ENCODE measurements at regions of chr9 and their contacts with region 1.

Region 1: GRCh38 chr9:112379177-112380101 is 469 bp upstream of the HSDL2 start:
- DNase-seq: peak; percentile 93 to 96 (median 94)
- H3K4me3 ChIP-seq: peak overlapping the region; percentile 90 to 96
- H3K4me3 Mint-ChIP-seq: peak overlapping the region; percentile 97 to 100 (median 100)
- H3K27ac ChIP-seq: peak overlapping the region; percentile 91
- H3K27ac Mint-ChIP-seq: peak overlapping the region; percentile 93 to 100 (median 99)
- H3K4me1 ChIP-seq: peaks cover 23% of the 10 kb centered on the region
- H3K4me1 Mint-ChIP-seq: peaks cover 32 to 65% (median 45%) of the 10 kb centered on the region in 4 donors
- H3K27me3 ChIP-seq: no peaks in the 10 kb centered on the region
- H3K27me3 Mint-ChIP-seq: no peaks in the 10 kb centered on the region

Region 2: GRCh38 chr9:111631071-111631971 is 748.1 kb before region 1 on chr9 and contains the start of gene DNAJC25:
- CTCF ChIA-PET with region 1: no interaction called
- POLR2A ChIA-PET with region 1: interaction called, 9 read pairs
- intact Hi-C with region 1: loop called (anchors 2 kb)
- DNase-seq: peak; percentile 96 to 98 (median 98)
- H3K4me3 ChIP-seq: peak within 1 kb of the TSS; percentile 69 to 86
- H3K4me3 Mint-ChIP-seq: peak within 1 kb of the TSS; percentile 94 to 99 (median 98)
- H3K27ac ChIP-seq: peak within 1 kb of the TSS; percentile 76
- H3K27ac Mint-ChIP-seq: peak within 1 kb of the TSS; percentile 88 to 97 (median 94)
- H3K4me1 ChIP-seq: peaks cover 21% of the 10 kb centered on the region
- H3K4me1 Mint-ChIP-seq: peaks cover 35 to 52% (median 43%) of the 10 kb centered on the region in 4 donors
- H3K27me3 ChIP-seq: no peaks in the 10 kb centered on the region
- H3K27me3 Mint-ChIP-seq: peaks cover 0 to 1% of the 10 kb centered on the region in 2 donors
- total RNA-seq, gene DNAJC25: 5.1 to 5.6 TPM

Region 3: DNA sequence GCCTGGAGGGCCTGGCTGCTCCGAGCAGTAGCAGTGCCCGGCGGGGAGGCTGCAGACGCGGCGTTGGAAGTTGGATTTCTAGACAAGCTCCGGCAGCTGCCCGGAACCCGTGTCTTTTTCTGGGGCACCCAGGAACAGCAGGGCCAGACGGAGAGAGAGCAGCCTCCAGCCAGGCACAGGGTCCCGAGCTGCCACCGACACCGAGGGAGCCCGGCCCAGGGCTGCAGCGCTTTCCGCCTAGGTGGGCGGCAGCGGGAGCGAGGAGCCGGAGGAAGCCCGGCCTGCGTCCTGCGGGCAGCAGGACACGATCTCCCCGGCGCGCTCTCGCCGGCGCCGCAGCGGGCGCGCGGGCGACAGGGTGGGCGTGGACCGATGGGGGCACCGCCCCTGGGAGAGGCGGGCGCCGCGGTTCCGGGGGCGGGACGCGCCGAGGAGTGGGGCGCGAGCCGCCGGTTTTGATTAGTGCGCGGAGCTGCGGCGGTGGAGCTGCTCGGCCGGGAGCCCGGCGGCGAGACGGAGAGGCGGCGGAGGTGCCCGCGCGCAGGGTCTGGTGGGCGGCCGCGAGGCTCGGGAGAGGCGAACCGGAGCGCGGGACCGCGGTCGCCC is 483.0 kb before region 1 on chr9 and contains the start of gene UGCG:
- CTCF ChIA-PET with region 1: no interaction called
- POLR2A ChIA-PET with region 1: interaction called, 8 read pairs
- intact Hi-C with region 1: loop called (anchors 1 kb)
- DNase-seq: peak; percentile 84 to 92 (median 89)
- H3K4me3 ChIP-seq: peak within 1 kb of the TSS; percentile 87 to 97
- H3K4me3 Mint-ChIP-seq: peak within 1 kb of the TSS; percentile 90 to 96 (median 93)
- H3K27ac ChIP-seq: peak within 1 kb of the TSS; percentile 70
- H3K27ac Mint-ChIP-seq: peak within 1 kb of the TSS; percentile 91 to 97 (median 95)
- H3K4me1 ChIP-seq: peaks cover 58% of the 10 kb centered on the region
- H3K4me1 Mint-ChIP-seq: peaks cover 23 to 32% (median 31%) of the 10 kb centered on the region in 4 donors
- H3K27me3 ChIP-seq: no peaks in the 10 kb centered on the region
- H3K27me3 Mint-ChIP-seq: no peaks in the 10 kb centered on the region
- total RNA-seq, gene UGCG: 26.3 to 29.7 TPM

Region 4: GRCh38 chr9:112212926-112213325 is 166.5 kb before region 1 on chr9:
- CTCF ChIA-PET with region 1: no interaction called
- POLR2A ChIA-PET with region 1: no interaction called
- intact Hi-C with region 1: no loop called
- DNase-seq: no peak
- H3K4me3 ChIP-seq: no peak overlapping the region
- H3K4me3 Mint-ChIP-seq: no peak overlapping the region
- H3K27ac ChIP-seq: no peak overlapping the region
- H3K27ac Mint-ChIP-seq: no peak overlapping the region
- H3K4me1 ChIP-seq: no peaks in the 10 kb centered on the region
- H3K4me1 Mint-ChIP-seq: peaks cover 0 to 4% (median 2%) of the 10 kb centered on the region in 4 donors
- H3K27me3 ChIP-seq: no peaks in the 10 kb centered on the region
- H3K27me3 Mint-ChIP-seq: no peaks in the 10 kb centered on the region

Region 5: GRCh38 chr9:112348257-112349007 is 31.0 kb before region 1 on chr9:
- CTCF ChIA-PET with region 1: no interaction called
- POLR2A ChIA-PET with region 1: interaction called, 5 read pairs
- intact Hi-C with region 1: loop called (anchors 1 kb)
- DNase-seq: peak; percentile 61 to 72 (median 65)
- H3K4me3 ChIP-seq: peak overlapping the region in 1 of 2 donors; percentile 51
- H3K4me3 Mint-ChIP-seq: peak overlapping the region; percentile 52 to 85 (median 78)
- H3K27ac ChIP-seq: no peak overlapping the region
- H3K27ac Mint-ChIP-seq: peak overlapping the region in 4 of 7 donors; percentile 67 to 83 (median 79)
- H3K4me1 ChIP-seq: peaks cover 11% of the 10 kb centered on the region
- H3K4me1 Mint-ChIP-seq: peaks cover 5 to 14% (median 9%) of the 10 kb centered on the region in 4 donors
- H3K27me3 ChIP-seq: no peaks in the 10 kb centered on the region
- H3K27me3 Mint-ChIP-seq: peaks cover 2 to 3% of the 10 kb centered on the region in 2 donors

Region 6: DNA sequence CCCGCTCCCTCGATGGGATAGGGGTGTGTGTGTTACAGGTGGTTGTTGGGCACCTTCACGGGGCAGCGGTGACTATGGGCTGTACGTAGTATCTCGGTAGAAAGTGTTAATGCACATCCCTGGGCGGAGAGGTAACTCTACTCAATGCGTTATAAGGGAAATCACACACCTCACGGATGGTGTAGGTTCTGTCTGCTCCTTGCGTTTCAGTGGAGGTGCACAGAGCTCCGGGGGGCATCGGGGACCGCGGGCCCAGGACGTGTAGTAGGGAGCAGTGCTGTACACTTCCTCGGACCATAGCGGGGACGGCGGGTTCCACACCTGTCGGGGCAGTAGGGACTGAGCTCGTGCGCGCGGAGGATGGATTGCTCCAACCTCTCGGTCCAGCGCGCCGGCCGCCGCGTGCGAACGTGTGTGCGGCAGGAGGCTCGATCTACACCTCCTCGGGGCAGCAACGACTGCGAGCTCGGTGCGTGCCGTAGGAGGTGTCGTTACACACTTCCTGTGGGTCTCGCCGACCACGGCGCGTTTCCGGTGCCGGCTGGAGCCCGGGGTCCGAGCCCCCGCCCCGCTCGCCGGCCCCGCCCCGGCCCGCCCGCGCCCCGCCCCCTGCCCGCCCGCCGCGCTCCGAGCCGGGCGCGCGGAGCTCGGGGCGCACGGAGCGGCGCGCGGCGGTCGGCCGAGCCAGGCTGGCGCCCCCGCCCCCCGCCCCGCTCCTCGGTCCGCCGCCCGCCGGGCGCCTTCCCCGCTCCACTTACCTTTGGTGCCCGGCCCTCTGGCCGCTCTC is 107.0 kb after region 1 on chr9 and contains the start of gene KIAA1958:
- CTCF ChIA-PET with region 1: interaction called, 3 read pairs
- POLR2A ChIA-PET with region 1: interaction called, 19 read pairs
- intact Hi-C with region 1: loop called (anchors 2 kb)
- DNase-seq: peak; percentile 65 to 76 (median 72)
- H3K4me3 ChIP-seq: peak within 1 kb of the TSS; percentile 77 to 78
- H3K4me3 Mint-ChIP-seq: peak within 1 kb of the TSS; percentile 93 to 99 (median 96)
- H3K27ac ChIP-seq: peak within 1 kb of the TSS; percentile 42
- H3K27ac Mint-ChIP-seq: peak within 1 kb of the TSS; percentile 79 to 95 (median 92)
- H3K4me1 ChIP-seq: peaks cover 8% of the 10 kb centered on the region
- H3K4me1 Mint-ChIP-seq: peaks cover 9 to 28% (median 16%) of the 10 kb centered on the region in 4 donors
- H3K27me3 ChIP-seq: no peaks in the 10 kb centered on the region
- H3K27me3 Mint-ChIP-seq: no peaks in the 10 kb centered on the region
- total RNA-seq, gene KIAA1958: 4.3 to 5.1 TPM

Region 7: GRCh38 chr9:112750111-112750767 is 370.8 kb after region 1 on chr9 and contains the start of gene SNX30:
- CTCF ChIA-PET with region 1: no interaction called
- POLR2A ChIA-PET with region 1: interaction called, 11 read pairs
- intact Hi-C with region 1: loop called (anchors 2 kb)
- DNase-seq: peak; percentile 76 to 84 (median 80)
- H3K4me3 ChIP-seq: peak within 1 kb of the TSS; percentile 57 to 77
- H3K4me3 Mint-ChIP-seq: peak within 1 kb of the TSS; percentile 85 to 93 (median 90)
- H3K27ac ChIP-seq: peak within 1 kb of the TSS; percentile 67
- H3K27ac Mint-ChIP-seq: peak within 1 kb of the TSS; percentile 87 to 97 (median 96)
- H3K4me1 ChIP-seq: peaks cover 62% of the 10 kb centered on the region
- H3K4me1 Mint-ChIP-seq: peaks cover 44 to 70% (median 56%) of the 10 kb centered on the region in 4 donors
- H3K27me3 ChIP-seq: no peaks in the 10 kb centered on the region
- H3K27me3 Mint-ChIP-seq: no peaks in the 10 kb centered on the region
- total RNA-seq, gene SNX30: 10.8 to 10.9 TPM

Region 8: GRCh38 chr9:113221003-113221799 is 841.8 kb after region 1 on chr9 and contains the starts of genes FKBP15 and SLC31A1:
- CTCF ChIA-PET with region 1: no interaction called
- POLR2A ChIA-PET with region 1: no interaction called
- intact Hi-C with region 1: loop called (anchors 10 kb)
- DNase-seq: peak; percentile 95 to 98 (median 97)
- H3K4me3 ChIP-seq: peak within 1 kb of the TSS; percentile 89 to 91
- H3K4me3 Mint-ChIP-seq: peak within 1 kb of the TSS; percentile 92 to 98 (median 96)
- H3K27ac ChIP-seq: peak within 1 kb of the TSS; percentile 90
- H3K27ac Mint-ChIP-seq: peak within 1 kb of the TSS; percentile 91 to 98 (median 96)
- H3K4me1 ChIP-seq: peaks cover 34% of the 10 kb centered on the region
- H3K4me1 Mint-ChIP-seq: peaks cover 28 to 48% (median 38%) of the 10 kb centered on the region in 4 donors
- H3K27me3 ChIP-seq: no peaks in the 10 kb centered on the region
- H3K27me3 Mint-ChIP-seq: no peaks in the 10 kb centered on the region
- total RNA-seq, gene FKBP15: 34.3 to 34.9 TPM
- total RNA-seq, gene SLC31A1: 4.1 to 4.2 TPM

Measured in CD4-positive, alpha-beta memory T cell (primary cell).